ENCODE measurements at regions of chr19 and their contacts with region 1.

Region 1: GRCh38 chr19:12139885-12140547 is at the start of gene ZNF20:
- DNase-seq: peak; percentile 93 to 97 (median 96)
- H3K4me3 ChIP-seq: peak within 1 kb of the TSS; percentile 61
- H3K27ac ChIP-seq: peak within 1 kb of the TSS in 1 of 2 donors; percentile 67
- H3K4me1 ChIP-seq: no peaks in the 10 kb centered on the region
- H3K27me3 ChIP-seq: no peaks in the 10 kb centered on the region
- CTCF ChIP-seq: peak in 1 of 3 donors; percentile 4
- EP300 ChIP-seq: no peak
- POLR2A ChIP-seq: peak; percentile 40
- total RNA-seq, gene ZNF20: 1.2 to 5.2 (median 3.2) TPM

Region 2: DNA sequence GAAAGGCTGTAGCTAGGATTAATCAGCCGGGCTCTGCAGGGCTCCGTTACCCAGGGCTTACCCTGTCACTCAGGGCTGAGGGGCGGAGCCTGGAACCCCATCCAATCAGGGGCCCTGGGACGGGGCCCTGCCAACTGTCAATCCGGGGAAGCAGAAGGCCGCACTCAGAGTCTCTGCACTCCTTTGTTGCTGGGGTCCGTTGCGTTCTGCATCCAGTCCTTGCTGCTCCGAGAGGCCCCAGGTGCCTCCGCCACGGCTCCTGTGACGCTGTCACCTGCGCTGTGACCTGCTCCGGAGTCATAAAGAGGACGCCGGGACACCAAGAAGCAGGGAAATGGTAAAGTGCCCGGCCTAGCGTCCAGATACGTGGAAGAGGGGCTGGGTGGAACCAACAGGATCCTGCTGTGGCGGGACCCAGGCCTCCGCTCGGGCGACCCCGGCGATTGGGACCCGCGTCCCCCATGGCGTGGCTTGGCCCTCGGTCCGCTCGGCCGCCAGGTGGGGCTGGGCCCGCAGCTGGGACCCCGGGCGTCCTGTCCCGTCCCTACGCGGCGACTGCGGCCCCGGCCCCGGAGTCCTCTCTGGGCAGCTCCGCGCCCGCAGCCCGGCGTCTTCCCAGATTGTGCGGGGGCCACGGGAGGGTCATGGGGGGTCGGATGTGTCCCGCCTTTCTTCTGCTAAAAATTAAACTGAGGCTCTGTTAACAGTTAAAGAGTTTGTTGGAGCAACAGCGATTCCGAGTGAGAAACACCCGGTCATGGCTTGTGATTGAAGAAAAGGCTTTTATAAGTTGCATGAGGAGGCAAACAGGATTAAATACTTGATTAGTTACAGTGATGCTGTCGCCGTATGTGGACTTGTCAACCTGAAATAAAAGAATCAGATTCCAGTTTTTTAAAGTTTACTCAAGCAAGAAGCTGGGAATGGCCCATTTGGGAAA is 341.4 kb before region 1 on chr19 and contains the start of gene ZNF491:
- intact Hi-C with region 1: loop called in 1 of 4 experiments (anchors 10 kb)
- DNase-seq: peak; percentile 86 to 92 (median 92)
- H3K4me3 ChIP-seq: peak within 1 kb of the TSS; percentile 58
- H3K27ac ChIP-seq: peak within 1 kb of the TSS; percentile 54 to 56
- H3K4me1 ChIP-seq: peaks cover 7% of the 10 kb centered on the region
- H3K27me3 ChIP-seq: no peaks in the 10 kb centered on the region
- CTCF ChIP-seq: peak in 1 of 3 donors; percentile 12
- EP300 ChIP-seq: no peak
- POLR2A ChIP-seq: no peak
- total RNA-seq, gene ZNF491: 2.2 to 6.5 (median 4.5) TPM

Region 3: DNA sequence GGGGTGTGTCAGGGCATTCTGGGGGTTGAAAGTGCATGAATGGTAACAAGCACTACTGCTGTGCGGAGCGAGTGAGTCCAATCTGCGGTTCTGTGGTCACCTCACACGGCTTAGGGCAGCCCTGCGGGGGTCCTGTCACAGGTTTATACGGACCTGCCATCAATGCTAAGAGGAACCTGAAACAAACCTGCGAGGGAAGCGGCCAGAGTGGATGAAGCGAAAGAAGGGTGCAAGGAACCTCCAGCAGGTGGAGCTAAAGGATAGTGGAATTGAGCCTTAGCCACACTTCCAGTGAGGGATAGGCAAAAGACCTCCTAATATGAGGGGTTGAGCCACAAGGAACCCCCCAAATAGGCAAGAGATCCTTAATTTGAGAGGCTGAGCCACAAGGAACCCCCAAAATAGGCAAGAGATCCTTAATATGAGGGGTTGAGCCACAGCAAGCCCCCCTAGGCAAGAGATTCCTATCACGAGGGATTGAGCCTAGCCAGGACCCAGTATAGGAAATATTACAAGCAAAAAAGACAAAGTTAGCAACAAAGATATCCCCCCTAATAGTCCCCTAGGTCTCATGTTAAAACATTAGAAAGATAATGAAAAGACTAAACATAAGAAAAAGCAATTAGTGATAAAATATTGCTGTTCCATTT is 258.7 kb before region 1 on chr19:
- intact Hi-C with region 1: loop called in 1 of 4 experiments (anchors 5 kb)
- DNase-seq: peak; percentile 56 to 76 (median 63)
- H3K4me3 ChIP-seq: no peak overlapping the region
- H3K27ac ChIP-seq: no peak overlapping the region
- H3K4me1 ChIP-seq: no peaks in the 10 kb centered on the region
- H3K27me3 ChIP-seq: no peaks in the 10 kb centered on the region
- CTCF ChIP-seq: peak; percentile 70 to 79 (median 76)
- EP300 ChIP-seq: no peak
- POLR2A ChIP-seq: no peak

Region 4: DNA sequence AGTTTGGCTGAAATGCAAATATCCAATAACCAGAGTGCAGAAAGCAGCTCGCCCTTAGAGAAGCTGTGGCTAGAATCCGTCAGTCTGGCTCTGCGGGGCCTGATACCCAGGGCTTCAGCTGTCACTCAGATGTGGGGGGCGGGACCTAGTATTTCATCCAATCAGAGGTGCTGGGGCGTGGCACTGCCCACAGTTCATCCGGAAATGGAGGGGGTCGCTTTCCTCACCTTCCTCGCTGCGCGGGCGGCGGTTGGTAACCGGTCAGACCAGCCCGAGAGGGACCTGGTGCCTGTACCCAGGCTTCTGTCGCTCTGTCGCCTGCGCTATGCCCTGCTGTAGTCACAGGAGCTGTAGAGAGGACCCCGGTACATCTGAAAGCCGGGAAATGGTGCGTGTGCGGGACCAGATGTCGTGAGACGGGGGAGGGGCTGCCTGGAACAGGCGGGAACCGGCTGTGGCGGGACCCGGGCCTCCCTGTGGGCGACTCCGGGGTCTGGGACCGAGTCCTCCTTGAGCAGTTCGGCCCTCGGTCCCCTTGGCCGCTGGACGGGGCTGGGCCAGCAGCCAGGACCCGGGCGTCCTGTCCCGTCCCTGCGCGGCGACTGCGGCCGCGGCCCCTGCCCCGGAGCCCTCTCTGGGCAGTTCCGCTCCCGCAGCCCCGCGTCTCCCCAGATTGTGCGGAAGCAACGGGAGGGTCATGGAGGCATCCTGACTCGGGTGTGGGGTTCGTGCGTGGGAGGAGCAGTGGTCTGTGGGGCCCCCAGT is 214.9 kb before region 1 on chr19 and contains the start of gene ZNF700:
- intact Hi-C with region 1: loop called in 1 of 4 experiments (anchors 2 kb)
- DNase-seq: peak; percentile 93 to 97 (median 95)
- H3K4me3 ChIP-seq: peak within 1 kb of the TSS; percentile 85
- H3K27ac ChIP-seq: peak within 1 kb of the TSS; percentile 38 to 91
- H3K4me1 ChIP-seq: peaks cover 15% of the 10 kb centered on the region
- H3K27me3 ChIP-seq: no peaks in the 10 kb centered on the region
- CTCF ChIP-seq: peak in 1 of 3 donors; percentile 20
- EP300 ChIP-seq: peak; percentile 74
- POLR2A ChIP-seq: peak; percentile 76
- total RNA-seq, gene ZNF700: 8.6 to 22.3 (median 14.0) TPM

Region 5: GRCh38 chr19:12036154-12036535 is 103.9 kb before region 1 on chr19:
- intact Hi-C with region 1: no loop called
- DNase-seq: no peak
- H3K4me3 ChIP-seq: peak overlapping the region; percentile 71
- H3K27ac ChIP-seq: no peak overlapping the region
- H3K4me1 ChIP-seq: peaks cover 6% of the 10 kb centered on the region
- H3K27me3 ChIP-seq: no peaks in the 10 kb centered on the region
- CTCF ChIP-seq: no peak
- EP300 ChIP-seq: no peak
- POLR2A ChIP-seq: no peak

Region 6: DNA sequence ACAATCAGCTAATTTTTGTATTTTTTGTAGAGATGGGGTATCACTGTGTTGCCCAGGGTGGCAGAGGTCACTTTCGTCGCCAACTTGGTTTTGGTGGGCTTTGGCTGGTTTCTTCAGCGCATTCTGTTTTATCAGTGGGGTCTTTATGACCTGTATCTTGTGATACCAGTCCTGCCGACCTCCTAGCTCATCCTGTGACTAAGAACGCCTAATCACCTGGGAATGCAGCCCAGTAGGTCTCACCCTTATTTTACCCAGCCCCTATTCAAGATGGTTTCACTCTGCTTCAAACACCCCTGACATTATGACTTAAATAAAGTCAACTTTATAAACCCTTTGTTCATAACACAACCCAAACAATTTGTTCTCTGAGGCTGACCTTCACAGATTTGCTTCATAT is 84.2 kb before region 1 on chr19:
- intact Hi-C with region 1: loop called in 3 of 4 experiments (anchors 5 to 10 kb)
- DNase-seq: no peak
- H3K4me3 ChIP-seq: no peak overlapping the region
- H3K27ac ChIP-seq: no peak overlapping the region
- H3K4me1 ChIP-seq: peaks cover 3% of the 10 kb centered on the region
- H3K27me3 ChIP-seq: no peaks in the 10 kb centered on the region
- CTCF ChIP-seq: no peak
- EP300 ChIP-seq: no peak
- POLR2A ChIP-seq: no peak

Region 7: DNA sequence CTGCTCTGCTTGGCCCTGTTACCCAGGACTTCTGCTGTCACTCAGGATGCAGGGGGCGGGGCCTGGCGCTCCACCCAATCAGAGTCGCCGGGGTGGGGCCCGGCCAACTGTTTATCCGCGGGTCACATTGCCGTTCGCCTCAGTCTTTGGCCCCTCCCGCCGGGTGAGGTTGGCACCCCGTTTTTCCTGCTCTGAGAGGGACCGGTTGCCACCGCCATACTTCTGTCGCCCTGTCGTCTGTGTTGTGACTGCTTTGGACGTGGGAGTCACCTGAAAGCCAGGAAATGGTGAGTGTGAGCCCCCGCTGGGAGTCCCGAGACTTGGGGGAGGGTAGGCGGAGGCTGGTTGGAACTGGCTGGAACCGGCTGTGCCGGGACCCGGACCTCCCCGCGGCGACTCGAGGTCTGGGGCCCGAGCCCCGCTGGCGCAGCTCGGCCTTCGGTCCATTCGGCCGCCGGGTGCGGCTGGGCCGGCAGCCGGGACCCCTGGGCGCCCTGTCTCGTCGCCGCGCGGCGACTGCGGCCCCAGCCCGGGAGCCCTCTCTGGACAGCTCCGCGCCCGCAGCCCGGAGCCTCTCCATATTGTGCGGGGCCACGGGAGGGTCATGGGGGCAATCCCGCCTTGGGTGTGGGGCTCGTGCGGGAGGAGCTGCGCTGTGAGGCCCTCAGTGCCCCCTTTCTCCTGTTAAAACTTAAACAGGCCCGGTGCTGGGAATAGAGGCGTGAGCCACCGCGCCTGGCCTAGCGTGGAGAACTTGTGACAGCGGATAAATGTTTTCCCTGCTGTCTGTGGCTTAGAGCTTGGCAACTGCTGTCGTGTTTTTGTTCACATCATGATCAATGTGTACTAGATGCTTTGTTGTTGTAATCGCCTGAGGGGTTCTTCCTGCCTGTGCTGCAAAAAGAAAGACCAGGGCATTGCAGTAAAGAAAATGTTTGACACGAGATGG is 75.2 kb before region 1 on chr19 and contains the start of gene ZNF844:
- intact Hi-C with region 1: loop called in 3 of 4 experiments (anchors 2 to 10 kb)
- DNase-seq: peak; percentile 97 to 98 (median 98)
- H3K4me3 ChIP-seq: peak within 1 kb of the TSS; percentile 86
- H3K27ac ChIP-seq: peak within 1 kb of the TSS; percentile 75 to 92
- H3K4me1 ChIP-seq: peaks cover 9% of the 10 kb centered on the region
- H3K27me3 ChIP-seq: no peaks in the 10 kb centered on the region
- CTCF ChIP-seq: peak in 2 of 3 donors; percentile 13 to 15
- EP300 ChIP-seq: no peak
- POLR2A ChIP-seq: peak; percentile 88
- total RNA-seq, gene ZNF844: 14.5 to 39.1 (median 16.8) TPM

Region 8: GRCh38 chr19:12092065-12092867 is 47.8 kb before region 1 on chr19:
- intact Hi-C with region 1: no loop called
- DNase-seq: peak; percentile 79 to 88 (median 81)
- H3K4me3 ChIP-seq: peak overlapping the region; percentile 62
- H3K27ac ChIP-seq: peak overlapping the region; percentile 55 to 62
- H3K4me1 ChIP-seq: peaks cover 3% of the 10 kb centered on the region
- H3K27me3 ChIP-seq: no peaks in the 10 kb centered on the region
- CTCF ChIP-seq: no peak
- EP300 ChIP-seq: no peak
- POLR2A ChIP-seq: no peak